ENCODE measurements at regions of chr11 and their contacts with region 1.

Region 1: DNA sequence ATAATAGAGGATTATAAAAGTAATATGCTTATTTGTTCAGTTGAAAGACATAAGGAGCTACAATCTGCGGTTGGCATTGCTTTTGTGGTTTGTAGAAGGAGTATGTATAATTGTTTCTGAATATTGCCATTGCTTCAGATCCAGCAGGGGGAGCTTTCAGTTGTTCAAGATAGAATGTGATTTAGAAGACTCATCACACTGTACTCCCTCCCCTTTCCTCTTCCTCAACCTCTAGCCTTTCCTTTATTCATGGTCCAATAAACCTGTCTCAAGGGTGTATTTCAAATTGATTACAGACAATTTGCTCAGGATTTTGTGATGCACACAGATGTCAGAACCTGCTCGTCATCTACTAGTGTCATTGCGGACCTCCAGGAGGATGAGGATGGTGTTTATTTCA is 9.8 kb downstream of the PRMT3 start:
- DNase-seq: peak; percentile 30
- ATAC-seq: peak; percentile 82
- H3K4me3 Mint-ChIP-seq: no peak overlapping the region
- H3K27ac Mint-ChIP-seq: no peak overlapping the region
- H3K4me1 Mint-ChIP-seq: peaks cover 24% of the 10 kb centered on the region
- H3K27me3 Mint-ChIP-seq: no peaks in the 10 kb centered on the region
- CTCF ChIP-seq: no peak

Region 2: DNA sequence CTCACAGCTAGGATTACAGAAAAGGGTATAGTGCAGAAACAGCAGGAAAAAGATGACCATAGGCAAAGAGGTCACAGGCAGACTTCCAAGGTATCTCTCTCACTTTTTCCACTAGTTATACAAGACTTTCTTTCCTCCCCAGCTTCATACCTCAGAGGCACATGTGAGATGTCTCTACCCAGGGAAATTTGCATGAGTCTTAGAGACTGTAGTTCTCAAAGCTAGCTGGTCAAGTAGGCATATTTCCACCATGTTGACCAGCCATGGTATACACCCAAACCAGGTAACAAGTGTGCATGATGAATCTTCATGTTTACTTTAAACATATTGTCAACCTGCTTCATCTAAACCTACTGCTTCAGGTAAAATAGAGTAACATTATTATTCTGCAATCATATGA is 18.2 kb after region 1 on chr11:
- CTCF ChIA-PET with region 1: interaction called, 21 read pairs
- POLR2A ChIA-PET with region 1: no interaction called
- intact Hi-C with region 1: no loop called
- DNase-seq: no peak
- ATAC-seq: peak; percentile 34
- H3K4me3 Mint-ChIP-seq: no peak overlapping the region
- H3K27ac Mint-ChIP-seq: no peak overlapping the region
- H3K4me1 Mint-ChIP-seq: peaks cover 20% of the 10 kb centered on the region
- H3K27me3 Mint-ChIP-seq: no peaks in the 10 kb centered on the region
- CTCF ChIP-seq: no peak

Region 3: GRCh38 chr11:20518323-20518834 is 121.1 kb after region 1 on chr11:
- CTCF ChIA-PET with region 1: no interaction called
- POLR2A ChIA-PET with region 1: no interaction called
- intact Hi-C with region 1: no loop called
- DNase-seq: no peak
- ATAC-seq: no peak
- H3K4me3 Mint-ChIP-seq: no peak overlapping the region
- H3K27ac Mint-ChIP-seq: no peak overlapping the region
- H3K4me1 Mint-ChIP-seq: no peaks in the 10 kb centered on the region
- H3K27me3 Mint-ChIP-seq: peaks cover 17% of the 10 kb centered on the region
- CTCF ChIP-seq: no peak

Region 4: DNA sequence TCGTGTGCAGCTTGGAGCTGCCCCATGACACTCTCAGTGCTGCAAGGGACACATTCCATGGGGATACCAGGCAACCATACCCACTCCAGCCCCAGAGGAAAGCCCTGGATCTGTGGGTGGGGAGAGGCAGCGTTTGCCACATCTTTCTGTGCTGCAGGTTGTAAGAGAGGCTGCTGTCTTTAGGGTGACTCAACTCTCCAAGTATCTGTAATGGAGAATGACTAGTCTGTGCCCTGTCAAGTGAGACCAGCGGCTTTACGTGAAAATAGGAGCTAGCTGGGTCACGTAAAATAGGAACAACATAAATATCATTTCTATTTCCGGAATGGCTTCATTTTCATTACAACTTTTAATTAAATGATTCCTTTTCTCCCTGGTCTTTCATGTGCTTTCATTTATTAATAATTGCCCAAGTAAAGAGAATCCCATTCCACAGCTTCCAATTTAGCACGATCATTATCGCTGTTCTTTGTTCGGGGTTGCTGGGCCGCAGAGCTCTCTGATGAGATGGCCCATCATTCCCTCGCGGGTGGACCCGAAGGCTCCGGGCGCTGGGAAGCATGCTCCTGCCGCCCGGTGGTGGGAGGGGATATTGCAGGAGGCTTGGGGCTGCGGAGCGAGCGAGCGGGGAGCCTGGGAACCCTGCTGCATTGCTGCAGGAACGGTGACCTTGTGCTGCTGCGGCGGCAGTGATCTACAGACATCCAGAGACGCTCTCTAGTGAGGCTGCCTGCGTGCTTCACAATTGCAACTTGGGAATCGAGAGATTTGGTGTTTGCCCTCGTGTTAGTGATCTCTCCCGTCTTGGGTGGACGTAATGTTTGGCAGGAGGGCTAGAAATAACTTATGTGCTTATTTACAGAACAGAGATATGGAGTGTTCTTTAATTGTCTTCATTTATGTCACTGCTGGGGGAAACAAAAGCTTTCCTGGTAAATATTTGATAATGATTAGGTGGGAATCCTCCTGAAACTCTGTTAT is 212.7 kb after region 1 on chr11:
- CTCF ChIA-PET with region 1: interaction called, 14 read pairs
- POLR2A ChIA-PET with region 1: no interaction called
- intact Hi-C with region 1: loop called (anchors 10 kb)
- DNase-seq: peak; percentile 75
- ATAC-seq: peak; percentile 97
- H3K4me3 Mint-ChIP-seq: no peak overlapping the region
- H3K27ac Mint-ChIP-seq: no peak overlapping the region
- H3K4me1 Mint-ChIP-seq: peaks cover 5% of the 10 kb centered on the region
- H3K27me3 Mint-ChIP-seq: peaks cover 73% of the 10 kb centered on the region
- CTCF ChIP-seq: peak; percentile 90